Activated CD4-positive, alpha-beta memory T cell treated with anti-CD3 and anti-CD28 coated beads for 36 hours (primary cell): ENCODE measurements at regions of chr1 and their contacts with region 1.

Region 1: GRCh38 chr1:89719502-89720306 is 86.8 kb downstream of the LRRC8C start:
- DNase-seq: no peak
- H3K4me3 Mint-ChIP-seq: no peak overlapping the region
- H3K27ac Mint-ChIP-seq: peak overlapping the region; percentile 97
- H3K4me1 Mint-ChIP-seq: peaks cover 92% of the 10 kb centered on the region
- H3K27me3 Mint-ChIP-seq: no peaks in the 10 kb centered on the region

Region 2: DNA sequence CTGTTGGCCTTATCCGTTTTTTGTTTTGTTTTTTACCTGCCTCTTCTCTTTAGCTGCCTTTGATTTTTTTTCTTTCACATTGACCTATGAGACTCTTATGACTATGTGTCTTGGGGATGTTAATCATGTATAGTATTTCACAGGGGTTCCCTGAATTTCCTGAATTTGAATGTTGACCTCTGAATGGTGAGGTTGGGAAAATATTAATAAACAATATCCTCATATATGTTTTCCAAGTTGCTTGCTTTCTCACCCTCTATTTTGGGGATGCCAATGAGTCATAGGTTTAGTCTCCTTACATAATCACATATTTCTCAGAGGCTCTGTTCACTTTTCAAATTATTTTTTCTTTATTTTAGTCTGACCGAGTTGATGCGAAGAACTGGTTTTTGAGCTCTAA is 476.7 kb before region 1 on chr1:
- CTCF ChIA-PET with region 1: no interaction called
- POLR2A ChIA-PET with region 1: no interaction called
- intact Hi-C with region 1: no loop called
- DNase-seq: no peak
- H3K4me3 Mint-ChIP-seq: no peak overlapping the region
- H3K27ac Mint-ChIP-seq: no peak overlapping the region
- H3K4me1 Mint-ChIP-seq: no peaks in the 10 kb centered on the region
- H3K27me3 Mint-ChIP-seq: no peaks in the 10 kb centered on the region

Region 3: GRCh38 chr1:89547563-89548485 is 171.9 kb before region 1 on chr1:
- CTCF ChIA-PET with region 1: no interaction called
- POLR2A ChIA-PET with region 1: no interaction called
- intact Hi-C with region 1: loop called (anchors 1 kb)
- DNase-seq: peak; percentile 71
- H3K4me3 Mint-ChIP-seq: peak overlapping the region; percentile 30
- H3K27ac Mint-ChIP-seq: peak overlapping the region; percentile 85
- H3K4me1 Mint-ChIP-seq: peaks cover 88% of the 10 kb centered on the region
- H3K27me3 Mint-ChIP-seq: no peaks in the 10 kb centered on the region

Region 4: DNA sequence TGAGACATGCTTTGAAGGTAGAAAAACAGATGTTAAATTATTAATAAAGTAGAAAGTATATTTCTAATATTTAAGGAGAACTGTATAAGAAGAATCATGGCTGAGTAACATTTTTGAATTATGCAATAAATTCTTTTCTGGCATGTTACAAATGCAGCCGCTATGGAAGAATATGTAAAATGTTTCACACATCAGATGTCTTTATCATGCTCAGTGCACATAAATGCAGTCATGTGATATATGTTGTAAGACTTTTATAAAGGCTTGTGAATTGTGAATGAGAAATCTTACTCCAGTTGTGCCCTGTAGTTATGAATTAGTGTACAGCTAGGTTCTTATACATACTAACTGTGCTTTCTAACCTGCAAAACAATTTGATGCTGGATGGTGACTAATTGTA is 141.6 kb before region 1 on chr1:
- CTCF ChIA-PET with region 1: no interaction called
- POLR2A ChIA-PET with region 1: no interaction called
- intact Hi-C with region 1: no loop called
- DNase-seq: no peak
- H3K4me3 Mint-ChIP-seq: no peak overlapping the region
- H3K27ac Mint-ChIP-seq: no peak overlapping the region
- H3K4me1 Mint-ChIP-seq: peaks cover 40% of the 10 kb centered on the region
- H3K27me3 Mint-ChIP-seq: no peaks in the 10 kb centered on the region

Region 5: DNA sequence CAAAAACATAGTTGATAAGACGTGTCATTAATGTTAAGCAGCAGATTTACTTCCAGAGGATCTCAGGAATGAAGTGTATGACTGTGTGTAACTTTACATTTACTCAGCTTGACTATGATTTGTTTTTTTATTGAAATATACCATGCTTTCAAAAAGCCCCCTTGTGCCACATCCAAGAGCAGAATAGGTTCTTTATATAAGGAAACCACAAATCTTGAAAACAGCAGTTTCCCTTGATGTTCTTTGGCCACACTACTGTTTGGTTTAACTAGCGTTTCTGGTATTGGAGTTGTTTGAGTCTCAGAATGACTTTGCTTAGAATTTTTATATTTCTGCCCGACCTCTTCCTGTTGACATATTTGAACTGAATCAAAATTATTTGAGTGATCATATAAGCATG is 61.8 kb before region 1 on chr1:
- CTCF ChIA-PET with region 1: interaction called, 8 read pairs
- POLR2A ChIA-PET with region 1: interaction called, 16 read pairs
- intact Hi-C with region 1: loop called (anchors 1 kb)
- DNase-seq: no peak
- H3K4me3 Mint-ChIP-seq: no peak overlapping the region
- H3K27ac Mint-ChIP-seq: peak overlapping the region; percentile 68
- H3K4me1 Mint-ChIP-seq: peaks cover 92% of the 10 kb centered on the region
- H3K27me3 Mint-ChIP-seq: no peaks in the 10 kb centered on the region

Region 6: DNA sequence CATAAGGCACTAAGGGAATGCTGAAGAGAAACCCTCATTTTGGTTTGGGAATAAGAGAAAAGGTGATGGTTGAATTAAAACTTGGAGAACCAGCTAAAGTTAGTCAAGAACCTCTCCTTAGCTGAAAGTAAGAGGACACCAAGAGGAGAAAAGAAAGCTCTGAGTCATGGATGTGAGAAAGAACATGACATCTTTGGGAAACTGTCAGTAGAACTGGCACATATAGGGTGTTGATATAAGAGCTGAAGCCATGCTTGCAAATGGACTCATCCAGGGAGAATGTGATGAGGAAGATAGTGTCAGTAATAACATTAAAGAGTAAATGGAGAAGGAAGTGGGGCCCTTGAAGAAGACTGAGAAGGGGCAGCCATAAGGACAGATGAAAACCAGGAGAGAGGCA is 32.5 kb before region 1 on chr1:
- CTCF ChIA-PET with region 1: no interaction called
- POLR2A ChIA-PET with region 1: interaction called, 10 read pairs
- intact Hi-C with region 1: loop called (anchors 5 kb)
- DNase-seq: no peak
- H3K4me3 Mint-ChIP-seq: no peak overlapping the region
- H3K27ac Mint-ChIP-seq: peak overlapping the region; percentile 88
- H3K4me1 Mint-ChIP-seq: peaks cover 74% of the 10 kb centered on the region
- H3K27me3 Mint-ChIP-seq: no peaks in the 10 kb centered on the region

Region 7: DNA sequence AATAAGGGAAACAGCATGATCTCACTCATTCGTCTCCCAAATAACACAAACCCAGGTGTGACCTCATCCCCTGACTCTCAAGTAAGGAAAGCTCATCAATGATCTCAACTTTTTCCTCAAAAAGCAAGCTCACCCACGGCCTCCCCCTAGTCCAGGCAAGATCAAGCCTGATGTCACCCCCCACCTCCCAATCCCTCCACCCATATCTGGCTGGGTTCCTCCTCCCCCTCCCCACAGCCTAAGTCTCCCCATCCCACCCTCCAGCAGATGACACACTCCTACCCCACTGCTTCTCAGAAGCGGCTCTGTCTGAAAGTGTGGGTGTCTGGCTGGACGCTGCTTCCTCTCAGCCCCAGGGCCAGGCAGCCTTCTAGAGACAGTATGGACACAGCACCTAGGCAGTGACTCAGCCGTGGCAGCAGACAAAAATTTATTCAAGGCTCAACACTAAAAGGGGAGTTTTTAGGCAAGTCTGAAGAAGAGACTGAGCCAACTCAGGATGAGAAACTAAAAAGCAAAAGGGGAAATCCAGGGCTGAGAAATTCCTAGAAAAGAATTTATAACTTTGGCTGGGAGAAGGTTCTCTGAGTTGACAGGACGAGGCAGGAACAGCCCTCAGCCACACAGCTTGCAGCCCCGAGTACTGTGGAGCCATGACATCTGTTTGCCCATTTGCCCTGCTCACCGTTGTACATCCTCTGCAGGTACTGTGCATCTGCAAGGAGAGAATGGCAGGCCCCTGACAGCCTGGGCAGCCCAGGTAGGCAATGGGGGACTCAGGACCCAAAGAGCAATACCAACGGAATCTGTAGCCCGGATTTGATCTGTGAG is 19.5 kb after region 1 on chr1:
- CTCF ChIA-PET with region 1: interaction called, 7 read pairs
- POLR2A ChIA-PET with region 1: interaction called, 4 read pairs
- intact Hi-C with region 1: loop called (anchors 1 kb)
- DNase-seq: peak; percentile 78
- H3K4me3 Mint-ChIP-seq: peak overlapping the region; percentile 68
- H3K27ac Mint-ChIP-seq: peak overlapping the region; percentile 83
- H3K4me1 Mint-ChIP-seq: peaks cover 45% of the 10 kb centered on the region
- H3K27me3 Mint-ChIP-seq: no peaks in the 10 kb centered on the region

Region 8: DNA sequence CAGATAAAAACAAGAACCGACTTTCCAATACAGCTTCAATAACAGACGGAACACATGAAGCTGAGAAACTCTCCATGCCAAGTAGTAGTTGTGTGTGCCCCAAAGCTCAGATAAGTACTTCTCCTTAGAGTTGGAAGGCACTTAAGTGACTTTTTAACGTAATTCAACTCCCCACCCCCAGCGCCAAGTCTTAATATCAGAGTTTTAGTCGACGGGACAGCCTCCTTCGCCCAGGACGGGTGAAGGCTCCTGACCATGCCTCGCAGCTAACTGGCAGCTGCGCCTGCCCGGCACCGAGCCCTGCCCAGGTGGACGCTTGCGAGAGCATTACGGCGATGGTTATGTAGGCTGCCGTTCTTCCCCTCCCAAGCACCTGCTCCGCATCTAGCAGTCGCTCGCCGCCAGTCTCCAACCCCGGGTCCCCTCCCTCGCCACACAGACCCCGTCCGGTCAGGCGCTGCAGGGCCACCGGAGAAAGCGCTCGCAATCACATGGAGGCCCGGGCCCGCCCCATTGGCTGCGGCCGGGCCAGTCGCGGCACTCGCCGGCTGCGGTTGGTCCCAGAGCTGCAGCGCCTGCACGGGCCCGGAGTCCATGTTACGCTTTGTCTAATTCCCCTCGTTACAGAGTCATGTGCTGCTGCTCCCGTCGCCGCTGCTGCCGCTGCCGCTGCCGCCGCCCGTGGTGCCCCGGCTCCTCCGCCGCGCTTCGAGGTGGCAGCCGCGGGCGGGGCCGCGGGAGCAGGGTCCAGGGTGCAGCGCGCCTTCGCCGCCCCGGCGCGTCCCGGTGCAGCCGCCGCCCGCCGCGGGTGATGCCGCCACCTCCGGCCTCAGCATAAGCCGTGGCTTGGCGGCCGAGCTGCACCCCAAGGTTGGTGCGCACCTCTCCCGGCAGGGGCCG is 101.0 kb after region 1 on chr1 and contains the start of gene LRRC8D:
- CTCF ChIA-PET with region 1: no interaction called
- POLR2A ChIA-PET with region 1: no interaction called
- intact Hi-C with region 1: no loop called
- DNase-seq: peak; percentile 86
- H3K4me3 Mint-ChIP-seq: peak within 1 kb of the TSS; percentile 85
- H3K27ac Mint-ChIP-seq: peak within 1 kb of the TSS; percentile 55
- H3K4me1 Mint-ChIP-seq: peaks cover 26% of the 10 kb centered on the region
- H3K27me3 Mint-ChIP-seq: no peaks in the 10 kb centered on the region
- total RNA-seq, gene LRRC8D: 17.7 to 19.4 TPM